Heart left ventricle (tissue), 16 donors: ENCODE measurements at regions of chr19 and their contacts with region 1.

Region 1: DNA sequence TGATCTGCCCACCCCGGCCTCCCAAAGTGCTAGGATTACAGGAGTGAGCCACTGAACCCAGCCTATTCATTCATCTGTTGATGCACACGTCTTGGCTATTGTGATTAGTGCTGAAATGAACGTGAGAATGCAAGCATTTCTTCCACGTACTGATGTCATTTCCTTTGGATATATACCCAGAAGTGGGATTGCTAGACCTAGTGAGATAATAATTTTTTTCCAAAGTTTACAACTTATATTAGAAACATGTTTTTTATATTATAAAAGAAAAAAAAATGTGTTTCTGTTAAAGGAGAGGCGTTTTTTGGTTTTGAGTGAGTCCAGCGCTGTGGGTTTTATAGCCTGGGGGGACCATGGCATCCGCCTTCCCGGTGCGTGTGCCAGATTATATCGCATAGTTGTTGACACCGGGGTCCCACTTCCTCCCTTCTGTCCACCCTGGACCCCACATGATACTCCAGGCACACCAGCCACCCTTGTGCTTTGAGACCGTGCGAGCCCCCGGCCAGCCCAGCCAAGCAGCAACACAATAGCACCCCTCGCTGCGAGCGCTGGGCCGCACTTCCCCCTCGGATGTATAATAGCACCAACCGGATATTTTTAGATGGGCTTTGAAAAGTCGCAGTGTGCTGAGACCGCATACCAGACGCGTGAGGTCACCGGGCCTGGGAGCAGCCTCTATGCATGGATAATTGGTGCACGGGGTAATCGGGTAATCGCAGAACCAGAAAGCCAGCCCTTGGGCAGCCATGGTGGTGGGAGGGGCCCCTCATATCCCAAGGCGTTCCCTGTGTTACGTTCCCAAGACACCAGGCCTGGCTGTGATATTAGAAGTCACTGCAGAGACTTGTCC is 59.6 kb downstream of the MYO9B start:
- DNase-seq: peak; percentile 94 to 98 (median 96)
- ATAC-seq: peak; percentile 90 to 95 (median 92)
- H3K4me3 ChIP-seq: peak overlapping the region in 9 of 12 donors; percentile 19 to 53 (median 34)
- H3K27ac ChIP-seq: peak overlapping the region; percentile 82 to 98 (median 92)
- H3K4me1 ChIP-seq: peaks cover 9 to 56% (median 42%) of the 10 kb centered on the region in 12 donors
- H3K27me3 ChIP-seq: no peaks in the 10 kb centered on the region
- CTCF ChIP-seq: peak in 10 of 12 donors; percentile 18 to 71 (median 45)
- POLR2A ChIP-seq: peak in 1 of 2 donors; percentile 36

Region 2: GRCh38 chr19:17081672-17082630 is 53.3 kb before region 1 on chr19:
- intact Hi-C with region 1: loop called in 9 of 10 experiments (anchors 2 to 5 kb)
- DNase-seq: peak; percentile 58 to 78 (median 72)
- ATAC-seq: peak; percentile 9 to 56 (median 29)
- H3K4me3 ChIP-seq: peak overlapping the region in 1 of 12 donors; percentile 10
- H3K27ac ChIP-seq: peak overlapping the region in 11 of 12 donors; percentile 11 to 89 (median 70)
- H3K4me1 ChIP-seq: peaks cover 0 to 66% (median 42%) of the 10 kb centered on the region in 12 donors
- H3K27me3 ChIP-seq: no peaks in the 10 kb centered on the region
- CTCF ChIP-seq: peak in 6 of 12 donors; percentile 6 to 40 (median 14)
- POLR2A ChIP-seq: no peak

Region 3: GRCh38 chr19:17097593-17098126 is 37.6 kb before region 1 on chr19:
- intact Hi-C with region 1: loop called in 1 of 10 experiments (anchors 5 kb)
- DNase-seq: no peak
- ATAC-seq: peak in 3 of 4 donors; percentile 47 to 63 (median 60)
- H3K4me3 ChIP-seq: no peak overlapping the region
- H3K27ac ChIP-seq: peak overlapping the region in 11 of 12 donors; percentile 24 to 64 (median 40)
- H3K4me1 ChIP-seq: peaks cover 0 to 47% (median 21%) of the 10 kb centered on the region in 12 donors
- H3K27me3 ChIP-seq: no peaks in the 10 kb centered on the region
- CTCF ChIP-seq: no peak
- POLR2A ChIP-seq: peak in 1 of 2 donors; percentile 19